Activated CD4-positive, alpha-beta memory T cell treated with anti-CD3 and anti-CD28 coated beads for 36 hours (primary cell): ENCODE measurements at regions of chr10 and their contacts with region 1.

Region 1: DNA sequence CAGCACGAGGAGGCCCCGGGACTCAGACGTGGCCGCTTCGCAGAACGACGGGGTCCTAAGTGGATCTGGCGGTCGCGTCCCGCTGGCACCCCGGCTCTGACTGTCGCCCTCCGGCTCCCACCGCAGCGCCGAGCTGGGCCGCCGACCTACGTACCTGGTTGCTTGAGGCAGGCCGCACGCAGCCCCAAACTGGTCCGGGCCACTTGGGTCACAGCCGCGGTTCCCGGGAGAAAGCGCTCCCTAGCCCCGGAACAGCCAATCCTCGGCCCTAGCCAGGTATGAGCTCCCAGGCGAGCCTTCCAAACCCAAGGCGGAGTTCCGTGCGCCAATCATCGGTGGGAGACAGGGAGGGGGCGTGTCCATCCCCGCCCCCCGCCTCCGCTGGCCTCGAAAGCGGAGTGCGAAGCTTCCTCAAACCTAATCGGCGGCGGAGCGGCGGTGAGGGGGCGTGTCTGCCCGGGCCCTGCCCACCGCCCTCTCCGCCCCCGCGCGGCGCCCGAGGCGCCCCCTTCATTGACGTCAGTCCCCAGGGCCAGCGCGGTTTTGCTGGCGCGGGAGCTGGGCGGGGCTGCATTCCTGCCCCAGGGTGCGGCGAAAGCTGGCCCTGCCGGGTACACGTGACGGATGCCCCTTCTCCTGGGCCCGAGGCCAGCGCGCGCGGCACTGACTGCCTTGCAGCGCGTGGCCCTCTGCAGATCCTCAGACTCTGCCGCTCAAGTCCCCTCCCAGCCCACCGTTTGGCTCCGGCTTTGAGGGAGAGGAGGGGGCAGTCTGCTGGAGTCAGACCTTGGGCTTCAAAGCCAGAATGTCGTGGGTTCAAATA is at the start of gene AVPI1:
- DNase-seq: peak; percentile 96
- H3K4me3 Mint-ChIP-seq: peak within 1 kb of the TSS; percentile 77
- H3K27ac Mint-ChIP-seq: peak within 1 kb of the TSS; percentile 4
- H3K4me1 Mint-ChIP-seq: peaks cover 14% of the 10 kb centered on the region
- H3K27me3 Mint-ChIP-seq: no peaks in the 10 kb centered on the region
- total RNA-seq, gene AVPI1: 1.7 to 2.1 TPM

Region 2: DNA sequence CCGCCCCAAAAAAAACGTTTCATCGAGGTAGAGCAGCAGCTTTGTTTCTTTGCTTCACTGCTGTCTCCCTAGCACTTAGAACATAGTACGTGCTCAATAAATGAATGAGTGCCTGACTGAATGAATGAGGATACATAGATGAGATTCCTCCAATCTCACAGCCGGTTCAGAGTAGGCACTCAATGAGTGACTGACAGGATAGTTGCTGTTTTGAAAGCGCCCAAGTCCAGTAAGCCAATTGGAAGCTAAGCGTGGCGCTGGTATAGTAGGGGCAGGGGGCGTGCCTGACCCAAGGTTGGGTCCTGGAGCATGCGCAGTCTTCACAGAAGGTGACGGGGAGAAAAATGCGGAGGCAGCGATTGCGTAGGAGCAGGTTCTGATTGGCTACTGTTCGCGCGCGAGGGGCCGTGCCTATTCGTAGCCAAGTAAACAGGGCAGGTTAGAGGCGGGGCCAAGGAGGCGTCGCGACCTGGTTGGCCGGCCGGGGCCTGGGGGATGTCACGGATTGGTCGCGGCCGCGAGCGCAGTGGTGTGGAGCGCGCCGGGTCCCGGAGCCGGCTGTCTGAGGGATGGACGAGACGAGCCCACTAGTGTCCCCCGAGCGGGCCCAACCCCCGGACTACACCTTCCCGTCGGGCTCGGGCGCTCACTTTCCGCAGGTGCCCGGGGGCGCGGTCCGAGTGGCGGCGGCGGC is 46.9 kb before region 1 on chr10 and contains the start of gene PI4K2A:
- CTCF ChIA-PET with region 1: no interaction called
- POLR2A ChIA-PET with region 1: interaction called, 9 read pairs
- intact Hi-C with region 1: loop called (anchors 1 kb)
- DNase-seq: peak; percentile 100
- H3K4me3 Mint-ChIP-seq: peak within 1 kb of the TSS; percentile 97
- H3K27ac Mint-ChIP-seq: peak within 1 kb of the TSS; percentile 79
- H3K4me1 Mint-ChIP-seq: peaks cover 17% of the 10 kb centered on the region
- H3K27me3 Mint-ChIP-seq: no peaks in the 10 kb centered on the region
- total RNA-seq, gene PI4K2A: 13.1 to 13.2 TPM

Region 3: GRCh38 chr10:97701438-97702069 is 14.4 kb after region 1 on chr10:
- CTCF ChIA-PET with region 1: interaction called, 47 read pairs
- POLR2A ChIA-PET with region 1: interaction called, 3 read pairs
- intact Hi-C with region 1: no loop called
- DNase-seq: peak; percentile 62
- H3K4me3 Mint-ChIP-seq: no peak overlapping the region
- H3K27ac Mint-ChIP-seq: no peak overlapping the region
- H3K4me1 Mint-ChIP-seq: no peaks in the 10 kb centered on the region
- H3K27me3 Mint-ChIP-seq: peaks cover 4% of the 10 kb centered on the region

Region 4: GRCh38 chr10:97731346-97732051 is 44.3 kb after region 1 on chr10:
- CTCF ChIA-PET with region 1: interaction called, 28 read pairs
- POLR2A ChIA-PET with region 1: interaction called, 12 read pairs
- intact Hi-C with region 1: no loop called
- DNase-seq: peak; percentile 63
- H3K4me3 Mint-ChIP-seq: no peak overlapping the region
- H3K27ac Mint-ChIP-seq: no peak overlapping the region
- H3K4me1 Mint-ChIP-seq: peaks cover 10% of the 10 kb centered on the region
- H3K27me3 Mint-ChIP-seq: peaks cover 8% of the 10 kb centered on the region

Region 5: GRCh38 chr10:97849687-97850402 is 162.7 kb after region 1 on chr10 and contains the start of gene GOLGA7B:
- CTCF ChIA-PET with region 1: no interaction called
- POLR2A ChIA-PET with region 1: no interaction called
- intact Hi-C with region 1: loop called (anchors 5 kb)
- DNase-seq: peak; percentile 68
- H3K4me3 Mint-ChIP-seq: peak within 1 kb of the TSS; percentile 73
- H3K27ac Mint-ChIP-seq: peak within 1 kb of the TSS; percentile 9
- H3K4me1 Mint-ChIP-seq: peaks cover 37% of the 10 kb centered on the region
- H3K27me3 Mint-ChIP-seq: no peaks in the 10 kb centered on the region
- total RNA-seq, gene GOLGA7B: 0.86 to 0.87 TPM

Region 6: DNA sequence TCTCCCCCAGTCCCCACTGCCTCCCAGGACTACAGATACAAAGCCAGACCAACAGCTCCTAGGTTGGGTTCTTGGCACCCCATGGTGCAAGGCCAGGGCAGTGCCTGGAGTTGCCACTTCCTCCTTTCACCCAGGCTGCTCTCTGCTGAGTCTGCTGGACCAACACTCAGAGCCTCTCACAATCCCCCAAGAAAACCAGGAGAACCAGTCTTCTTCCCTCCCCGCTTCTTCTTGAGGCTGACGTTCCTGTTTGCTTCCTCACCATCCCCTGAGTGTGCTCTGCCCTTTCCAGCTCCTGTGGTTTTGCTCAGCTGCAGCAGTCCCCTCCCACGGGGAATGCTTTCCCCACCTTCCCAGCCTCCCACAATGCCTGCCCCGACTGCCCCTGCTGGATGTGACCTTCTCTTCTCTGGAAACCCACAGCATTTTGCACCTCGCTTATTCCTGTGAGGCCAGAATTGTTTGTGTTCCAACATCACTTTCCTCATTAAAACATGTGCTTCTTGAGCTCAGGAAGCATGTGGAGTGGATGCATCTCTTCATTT is 252.3 kb after region 1 on chr10:
- CTCF ChIA-PET with region 1: no interaction called
- POLR2A ChIA-PET with region 1: no interaction called
- intact Hi-C with region 1: no loop called
- DNase-seq: no peak
- H3K4me3 Mint-ChIP-seq: no peak overlapping the region
- H3K27ac Mint-ChIP-seq: no peak overlapping the region
- H3K4me1 Mint-ChIP-seq: no peaks in the 10 kb centered on the region
- H3K27me3 Mint-ChIP-seq: peaks cover 12% of the 10 kb centered on the region